ENCODE measurements at regions of chr1 and their contacts with region 1.

Region 1: DNA sequence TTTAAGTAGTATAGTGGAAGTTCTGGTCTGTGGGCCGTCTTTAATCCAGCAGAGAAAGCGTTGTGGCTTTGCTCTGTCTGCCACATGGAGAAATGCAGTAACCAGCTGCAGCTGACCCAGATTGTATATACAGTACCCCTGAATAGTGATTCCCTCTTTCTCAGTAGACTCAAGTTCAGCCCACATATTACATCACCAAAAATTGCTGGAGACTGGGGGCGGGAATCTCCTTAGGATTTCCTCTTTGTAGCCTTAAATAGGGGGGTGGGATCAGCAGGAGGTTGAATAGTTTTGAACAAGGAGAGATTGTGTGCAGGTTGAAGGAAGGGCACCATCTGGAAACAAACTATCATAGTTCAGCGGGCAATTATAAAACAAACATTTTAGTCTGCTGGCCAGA is at the start of gene ANGPTL1:
- DNase-seq: no peak
- ATAC-seq: no peak
- H3K4me3 ChIP-seq: no peak within 1 kb of the TSS
- H3K4me3 Mint-ChIP-seq: no peak within 1 kb of the TSS
- H3K27ac ChIP-seq: peak within 1 kb of the TSS in 1 of 2 donors; percentile 73
- H3K27ac Mint-ChIP-seq: peak within 1 kb of the TSS; percentile 85
- H3K4me1 ChIP-seq: peaks cover 0 to 13% of the 10 kb centered on the region in 2 donors
- H3K4me1 Mint-ChIP-seq: peaks cover 43% of the 10 kb centered on the region
- H3K27me3 ChIP-seq: no peaks in the 10 kb centered on the region
- H3K27me3 Mint-ChIP-seq: no peaks in the 10 kb centered on the region
- CTCF ChIP-seq: no peak
- total RNA-seq, gene ANGPTL1: not detected in 2 replicates

Region 2: DNA sequence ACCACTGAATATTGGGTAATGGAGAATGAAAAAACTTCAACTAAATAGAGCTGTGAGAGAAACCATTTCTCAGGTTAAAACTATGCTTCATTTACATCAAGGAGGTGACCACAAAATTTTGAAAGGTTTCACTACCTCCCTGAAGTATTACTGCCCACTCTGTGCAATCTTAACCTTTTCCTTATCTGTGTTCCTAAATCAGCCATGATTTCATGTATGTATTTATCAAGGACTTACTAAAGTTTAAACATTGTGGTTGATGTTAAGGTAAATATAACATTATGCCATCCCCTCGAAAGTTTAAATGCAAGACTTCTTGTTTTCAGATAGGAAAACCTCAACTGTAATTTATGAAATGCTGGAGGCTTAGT is 458.6 kb before region 1 on chr1:
- CTCF ChIA-PET with region 1: no interaction called
- POLR2A ChIA-PET with region 1: no interaction called
- intact Hi-C with region 1: no loop called
- DNase-seq: no peak
- ATAC-seq: no peak
- H3K4me3 ChIP-seq: peak overlapping the region in 1 of 5 experiments; percentile 11
- H3K4me3 Mint-ChIP-seq: peak overlapping the region; percentile 33
- H3K27ac ChIP-seq: peak overlapping the region in 1 of 2 donors; percentile 42
- H3K27ac Mint-ChIP-seq: peak overlapping the region; percentile 18
- H3K4me1 ChIP-seq: peaks cover 7 to 24% of the 10 kb centered on the region in 2 donors
- H3K4me1 Mint-ChIP-seq: peaks cover 27% of the 10 kb centered on the region
- H3K27me3 ChIP-seq: no peaks in the 10 kb centered on the region
- H3K27me3 Mint-ChIP-seq: peaks cover 10% of the 10 kb centered on the region
- CTCF ChIP-seq: no peak

Region 3: GRCh38 chr1:178532392-178532791 is 338.6 kb before region 1 on chr1:
- CTCF ChIA-PET with region 1: interaction called, 16 read pairs
- POLR2A ChIA-PET with region 1: no interaction called
- intact Hi-C with region 1: no loop called
- DNase-seq: peak; percentile 87
- ATAC-seq: peak; percentile 90
- H3K4me3 ChIP-seq: no peak overlapping the region
- H3K4me3 Mint-ChIP-seq: no peak overlapping the region
- H3K27ac ChIP-seq: no peak overlapping the region
- H3K27ac Mint-ChIP-seq: no peak overlapping the region
- H3K4me1 ChIP-seq: peaks cover 0 to 9% of the 10 kb centered on the region in 2 donors
- H3K4me1 Mint-ChIP-seq: peaks cover 4% of the 10 kb centered on the region
- H3K27me3 ChIP-seq: no peaks in the 10 kb centered on the region
- H3K27me3 Mint-ChIP-seq: no peaks in the 10 kb centered on the region
- CTCF ChIP-seq: peak; percentile 98

Region 4: GRCh38 chr1:178664278-178664677 is 206.7 kb before region 1 on chr1:
- CTCF ChIA-PET with region 1: no interaction called
- POLR2A ChIA-PET with region 1: no interaction called
- intact Hi-C with region 1: no loop called
- DNase-seq: peak; percentile 82
- ATAC-seq: peak; percentile 89
- H3K4me3 ChIP-seq: peak overlapping the region in 2 of 5 experiments; percentile 13 to 17
- H3K4me3 Mint-ChIP-seq: peak overlapping the region; percentile 47
- H3K27ac ChIP-seq: peak overlapping the region; percentile 70 to 84
- H3K27ac Mint-ChIP-seq: peak overlapping the region; percentile 84
- H3K4me1 ChIP-seq: peaks cover 80 to 92% of the 10 kb centered on the region in 2 donors
- H3K4me1 Mint-ChIP-seq: peaks cover 83% of the 10 kb centered on the region
- H3K27me3 ChIP-seq: no peaks in the 10 kb centered on the region
- H3K27me3 Mint-ChIP-seq: no peaks in the 10 kb centered on the region
- CTCF ChIP-seq: no peak

Region 5: GRCh38 chr1:178857126-178857525 is 13.8 kb before region 1 on chr1:
- CTCF ChIA-PET with region 1: interaction called, 3 read pairs
- POLR2A ChIA-PET with region 1: no interaction called
- intact Hi-C with region 1: loop called (anchors 1 kb)
- DNase-seq: no peak
- ATAC-seq: no peak
- H3K4me3 ChIP-seq: no peak overlapping the region
- H3K4me3 Mint-ChIP-seq: no peak overlapping the region
- H3K27ac ChIP-seq: peak overlapping the region in 1 of 2 donors; percentile 38
- H3K27ac Mint-ChIP-seq: peak overlapping the region; percentile 16
- H3K4me1 ChIP-seq: no peaks in the 10 kb centered on the region
- H3K4me1 Mint-ChIP-seq: peaks cover 6% of the 10 kb centered on the region
- H3K27me3 ChIP-seq: no peaks in the 10 kb centered on the region
- H3K27me3 Mint-ChIP-seq: no peaks in the 10 kb centered on the region
- CTCF ChIP-seq: no peak

Region 6: GRCh38 chr1:178885869-178886268 is 14.9 kb after region 1 on chr1:
- CTCF ChIA-PET with region 1: no interaction called
- POLR2A ChIA-PET with region 1: no interaction called
- intact Hi-C with region 1: no loop called
- DNase-seq: no peak
- ATAC-seq: no peak
- H3K4me3 ChIP-seq: no peak overlapping the region
- H3K4me3 Mint-ChIP-seq: no peak overlapping the region
- H3K27ac ChIP-seq: peak overlapping the region in 1 of 2 donors; percentile 43
- H3K27ac Mint-ChIP-seq: no peak overlapping the region
- H3K4me1 ChIP-seq: no peaks in the 10 kb centered on the region
- H3K4me1 Mint-ChIP-seq: peaks cover 5% of the 10 kb centered on the region
- H3K27me3 ChIP-seq: no peaks in the 10 kb centered on the region
- H3K27me3 Mint-ChIP-seq: no peaks in the 10 kb centered on the region
- CTCF ChIP-seq: no peak

Measured in B cell (primary cell).